Esophagus muscularis mucosa (tissue), 4 donors: ENCODE measurements at regions of chr15 and their contacts with region 1.

Region 1: GRCh38 chr15:60507596-60508424 is 28.9 kb upstream of the ICE2 start:
- DNase-seq: no peak
- H3K4me3 ChIP-seq: no peak overlapping the region
- H3K27ac ChIP-seq: peak overlapping the region in 1 of 4 donors; percentile 10
- H3K4me1 ChIP-seq: peaks cover 11 to 15% (median 13%) of the 10 kb centered on the region in 4 donors
- H3K27me3 ChIP-seq: no peaks in the 10 kb centered on the region
- CTCF ChIP-seq: peak; percentile 92 to 94 (median 92)
- EP300 ChIP-seq: no peak
- POLR2A ChIP-seq: no peak

Region 2: GRCh38 chr15:60462027-60462426 is 45.8 kb before region 1 on chr15:
- intact Hi-C with region 1: no loop called
- DNase-seq: no peak
- H3K4me3 ChIP-seq: no peak overlapping the region
- H3K27ac ChIP-seq: no peak overlapping the region
- H3K4me1 ChIP-seq: no peaks in the 10 kb centered on the region
- H3K27me3 ChIP-seq: no peaks in the 10 kb centered on the region
- CTCF ChIP-seq: no peak
- EP300 ChIP-seq: no peak
- POLR2A ChIP-seq: no peak

Region 3: GRCh38 chr15:60592371-60593169 is 84.8 kb after region 1 on chr15:
- intact Hi-C with region 1: loop called (anchors 5 kb)
- DNase-seq: no peak
- H3K4me3 ChIP-seq: peak overlapping the region; percentile 83 to 97 (median 91)
- H3K27ac ChIP-seq: peak overlapping the region; percentile 94 to 98 (median 98)
- H3K4me1 ChIP-seq: peaks cover 13 to 33% (median 24%) of the 10 kb centered on the region in 4 donors
- H3K27me3 ChIP-seq: no peaks in the 10 kb centered on the region
- CTCF ChIP-seq: peak; percentile 20 to 37 (median 28)
- EP300 ChIP-seq: no peak
- POLR2A ChIP-seq: peak; percentile 35

Region 4: DNA sequence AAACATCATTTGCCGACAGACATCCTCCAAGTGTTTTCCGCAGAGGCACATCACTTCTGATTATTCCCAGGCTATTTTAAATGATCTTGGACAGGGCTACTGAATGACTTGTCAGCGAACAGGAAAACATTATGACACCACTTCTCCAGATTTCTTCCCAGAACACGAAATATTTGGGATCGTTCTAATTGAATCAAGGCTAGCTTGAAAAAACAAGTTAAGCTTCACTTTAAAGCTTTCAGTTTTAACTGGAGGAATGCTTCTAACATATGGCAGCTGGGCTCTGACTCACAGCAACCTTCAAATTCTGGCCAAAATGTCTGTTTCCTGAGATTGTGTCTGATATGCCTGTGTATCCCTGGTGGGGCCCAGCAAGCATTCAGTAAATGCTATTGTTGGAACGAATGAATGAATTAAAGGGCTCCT is 98.1 kb after region 1 on chr15:
- intact Hi-C with region 1: no loop called
- DNase-seq: no peak
- H3K4me3 ChIP-seq: peak overlapping the region; percentile 10 to 34 (median 20)
- H3K27ac ChIP-seq: peak overlapping the region; percentile 2 to 45 (median 29)
- H3K4me1 ChIP-seq: peaks cover 4 to 15% (median 11%) of the 10 kb centered on the region in 4 donors
- H3K27me3 ChIP-seq: no peaks in the 10 kb centered on the region
- CTCF ChIP-seq: no peak
- EP300 ChIP-seq: no peak
- POLR2A ChIP-seq: no peak

Region 5: DNA sequence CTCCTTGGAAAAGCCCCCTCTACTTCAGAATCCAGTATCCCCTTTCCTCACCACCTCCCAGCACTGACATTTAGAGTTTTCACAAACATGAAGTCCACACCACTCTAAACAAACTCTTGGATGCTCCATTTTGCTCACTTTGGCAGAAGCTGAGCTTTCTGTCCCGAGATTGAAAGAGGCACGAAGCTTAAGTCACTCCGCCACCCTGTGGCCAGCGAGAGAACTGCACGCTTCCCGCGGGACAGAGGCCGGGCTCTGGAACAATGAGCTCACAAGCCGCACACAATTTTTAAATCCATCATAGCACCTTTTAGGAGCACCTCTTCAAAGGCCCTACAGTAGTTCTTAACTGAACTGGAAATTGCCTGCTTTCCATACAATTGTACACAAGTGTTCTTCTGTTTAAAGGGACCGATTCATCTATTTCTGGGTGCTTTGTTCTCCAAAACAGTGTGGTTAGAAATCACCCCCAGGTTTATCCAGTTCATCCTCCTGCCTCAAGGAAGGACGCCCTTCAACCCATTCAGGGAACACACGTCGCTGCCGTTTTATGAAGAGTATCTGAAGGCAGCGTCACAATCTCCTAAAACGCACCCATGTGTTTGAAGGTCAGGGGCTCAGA is 1326.4 kb after region 1 on chr15:
- intact Hi-C with region 1: loop called (anchors 5 kb)
- DNase-seq: peak; percentile 96
- H3K4me3 ChIP-seq: no peak overlapping the region
- H3K27ac ChIP-seq: no peak overlapping the region
- H3K4me1 ChIP-seq: peaks cover 0 to 22% (median 8%) of the 10 kb centered on the region in 4 donors
- H3K27me3 ChIP-seq: no peaks in the 10 kb centered on the region
- CTCF ChIP-seq: peak; percentile 91 to 100 (median 92)
- EP300 ChIP-seq: no peak
- POLR2A ChIP-seq: no peak